ENCODE measurements at regions of chr17 and their contacts with region 1.

Region 1: DNA sequence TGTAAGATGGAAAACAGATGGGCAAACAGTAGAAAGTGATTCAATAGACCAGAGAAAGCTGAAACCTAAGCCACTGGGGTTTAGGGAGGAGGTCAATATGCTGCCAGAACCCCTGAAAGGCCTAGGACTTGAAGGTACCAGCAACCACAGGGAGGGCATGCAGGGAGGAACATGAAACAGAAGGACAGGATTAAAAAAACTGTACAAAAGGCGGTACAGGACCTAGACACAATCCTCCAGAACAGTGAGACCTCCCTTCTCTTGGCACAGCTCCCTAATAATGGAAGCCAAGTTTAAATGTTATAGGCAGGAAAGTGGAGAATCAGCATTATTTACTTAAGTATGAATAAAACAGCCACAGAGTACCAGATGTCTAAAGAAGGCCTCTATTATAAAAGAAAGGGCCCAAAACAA is 105.5 kb downstream of the SPAG9 start:
- DNase-seq: no peak
- ATAC-seq: peak in 1 of 8 donors; percentile 33
- H3K4me3 ChIP-seq: no peak overlapping the region
- H3K27ac ChIP-seq: peak overlapping the region in 3 of 10 donors; percentile 5 to 51 (median 44)
- H3K4me1 ChIP-seq: peaks cover 0 to 9% (median 0%) of the 10 kb centered on the region in 9 donors
- H3K27me3 ChIP-seq: no peaks in the 10 kb centered on the region
- CTCF ChIP-seq: no peak

Region 2: DNA sequence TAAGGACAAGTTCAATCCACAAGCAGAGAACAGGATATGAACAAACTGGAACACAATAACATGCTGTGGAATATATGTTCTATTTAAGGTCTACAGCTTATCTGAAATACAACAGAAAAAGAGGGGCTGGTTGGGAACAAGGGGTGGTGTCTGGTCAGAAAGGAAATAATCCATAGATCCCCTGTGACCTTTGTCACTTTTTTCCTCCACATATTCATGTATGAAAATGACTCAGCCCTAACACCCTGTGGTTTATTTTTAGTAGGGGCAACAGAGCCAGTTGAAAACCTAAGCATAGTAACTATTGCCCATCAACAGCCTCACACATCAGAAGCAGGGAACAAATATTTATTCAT is 117.8 kb after region 1 on chr17:
- intact Hi-C with region 1: loop called in 1 of 10 experiments (anchors 10 kb)
- DNase-seq: no peak
- ATAC-seq: peak; percentile 42 to 93 (median 82)
- H3K4me3 ChIP-seq: no peak overlapping the region
- H3K27ac ChIP-seq: peak overlapping the region; percentile 52 to 84 (median 74)
- H3K4me1 ChIP-seq: peaks cover 0 to 26% (median 11%) of the 10 kb centered on the region in 9 donors
- H3K27me3 ChIP-seq: no peaks in the 10 kb centered on the region
- CTCF ChIP-seq: no peak

Region 3: DNA sequence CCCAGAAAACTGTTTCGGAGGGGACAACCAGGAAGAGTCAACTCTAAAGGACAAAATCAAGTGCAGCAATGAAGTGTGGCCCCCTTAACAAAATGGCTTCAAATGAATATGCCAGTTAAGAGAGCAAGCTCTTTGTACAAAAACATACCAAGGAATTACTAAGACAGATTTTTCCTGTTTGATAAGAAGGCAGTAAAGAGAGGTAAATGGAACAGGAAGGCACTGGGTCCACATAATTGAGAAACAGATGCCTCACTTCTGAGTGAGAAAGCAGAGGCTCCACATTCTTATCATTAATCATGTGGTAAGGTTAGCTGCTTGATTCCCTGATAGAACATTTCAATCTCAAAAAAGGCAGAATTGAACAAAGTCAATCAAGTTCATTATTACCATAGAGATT is 199.8 kb after region 1 on chr17:
- intact Hi-C with region 1: no loop called
- DNase-seq: no peak
- ATAC-seq: no peak
- H3K4me3 ChIP-seq: no peak overlapping the region
- H3K27ac ChIP-seq: peak overlapping the region in 1 of 10 donors; percentile 35
- H3K4me1 ChIP-seq: peaks cover 0 to 6% (median 0%) of the 10 kb centered on the region in 9 donors
- H3K27me3 ChIP-seq: no peaks in the 10 kb centered on the region
- CTCF ChIP-seq: no peak

Measured in heart right ventricle (tissue), 16 donors.